ENCODE measurements at regions of chr6 and their contacts with region 1.

Region 1: DNA sequence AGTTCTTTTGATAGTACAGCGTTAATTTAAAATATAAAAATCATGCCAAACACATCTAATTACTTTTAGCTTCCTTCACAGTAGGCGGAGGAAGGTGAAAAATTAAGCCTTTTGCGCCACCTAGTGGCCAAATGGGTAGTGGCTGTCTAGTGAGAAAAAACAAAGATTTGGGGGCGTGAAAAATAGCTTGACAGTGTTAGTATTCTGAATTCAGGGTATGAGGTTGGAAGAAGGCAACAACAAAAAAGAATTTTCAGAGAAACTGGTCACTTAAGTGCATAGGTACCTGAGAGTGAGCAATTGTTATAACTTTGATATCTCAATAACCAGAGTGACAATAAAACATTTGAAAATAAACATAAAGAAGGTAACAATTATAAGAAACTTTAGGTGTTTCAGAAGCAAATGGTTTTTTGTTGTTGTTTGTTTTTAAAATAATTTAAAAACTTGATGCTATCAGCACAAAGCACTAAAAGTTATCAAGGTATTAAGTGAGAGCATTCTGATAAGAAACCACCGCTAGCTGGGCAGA is 14.3 kb downstream of the PSMB9 start:
- DNase-seq: peak; percentile 69 to 88 (median 73)
- ATAC-seq: peak; percentile 97
- H3K4me3 ChIP-seq: no peak overlapping the region
- H3K27ac ChIP-seq: no peak overlapping the region
- H3K4me1 ChIP-seq: no peaks in the 10 kb centered on the region
- H3K27me3 ChIP-seq: peaks cover 15 to 18% of the 10 kb centered on the region in 2 experiments; a peak in 4 of 5 replicates
- CTCF ChIP-seq: peak; percentile 82 to 98 (median 89)
- EP300 ChIP-seq: no peak
- POLR2A ChIP-seq: no peak
- RAD21 ChIP-seq: peak; percentile 95 to 98

Region 2: GRCh38 chr6:32413427-32414047 is 454.8 kb before region 1 on chr6:
- CTCF ChIA-PET with region 1: interaction called, 24 read pairs
- POLR2A ChIA-PET with region 1: no interaction called
- in situ Hi-C with region 1: no loop called
- intact Hi-C with region 1: loop called (anchors 2 kb)
- DNase-seq: peak; percentile 78 to 86 (median 82)
- ATAC-seq: peak; percentile 95
- H3K4me3 ChIP-seq: no peak overlapping the region
- H3K27ac ChIP-seq: no peak overlapping the region
- H3K4me1 ChIP-seq: no peaks in the 10 kb centered on the region
- H3K27me3 ChIP-seq: peaks cover 2 to 16% of the 10 kb centered on the region in 2 experiments; a peak in 4 of 5 replicates
- CTCF ChIP-seq: peak; percentile 89 to 95 (median 94)
- EP300 ChIP-seq: no peak
- POLR2A ChIP-seq: no peak
- RAD21 ChIP-seq: peak; percentile 87 to 95

Region 3: DNA sequence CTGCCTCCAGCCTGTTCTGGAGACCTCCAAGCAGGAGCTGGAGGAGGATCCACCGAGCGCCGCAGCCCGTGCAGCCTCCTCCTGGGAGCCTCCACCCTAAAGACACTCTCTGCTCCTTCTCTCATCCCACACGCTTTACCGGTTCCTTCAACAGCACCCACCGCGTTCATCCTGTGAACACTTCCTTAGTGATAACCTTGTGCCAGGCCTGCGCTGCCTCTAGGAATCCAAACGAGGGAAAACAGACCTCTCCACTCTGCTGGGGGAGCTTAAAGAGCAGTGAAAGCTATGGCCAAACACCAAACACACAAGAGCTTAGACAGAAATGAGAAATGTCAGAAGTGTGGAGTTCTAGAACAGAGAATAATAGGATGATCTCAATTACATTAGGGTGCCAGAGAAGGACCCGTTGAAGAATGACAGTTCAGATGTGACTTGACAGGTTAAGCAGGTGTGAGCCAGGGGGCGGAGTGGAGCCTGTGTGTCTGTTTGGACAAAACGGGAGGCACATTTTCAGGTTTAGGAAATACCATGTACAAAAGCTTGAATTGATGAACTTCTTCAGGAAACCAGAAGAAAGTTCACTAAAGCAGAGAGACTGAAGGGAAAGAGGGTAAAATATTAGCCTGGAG is 309.8 kb before region 1 on chr6:
- CTCF ChIA-PET with region 1: no interaction called
- POLR2A ChIA-PET with region 1: no interaction called
- in situ Hi-C with region 1: no loop called
- intact Hi-C with region 1: no loop called
- DNase-seq: no peak
- ATAC-seq: no peak
- H3K4me3 ChIP-seq: no peak overlapping the region
- H3K27ac ChIP-seq: no peak overlapping the region
- H3K4me1 ChIP-seq: no peaks in the 10 kb centered on the region
- H3K27me3 ChIP-seq: no peaks in the 10 kb centered on the region
- CTCF ChIP-seq: no peak
- EP300 ChIP-seq: no peak
- POLR2A ChIP-seq: no peak
- RAD21 ChIP-seq: no peak

Region 4: GRCh38 chr6:32796848-32797776 is 71.2 kb before region 1 on chr6:
- CTCF ChIA-PET with region 1: interaction called, 11 read pairs
- POLR2A ChIA-PET with region 1: interaction called, 4 read pairs
- in situ Hi-C with region 1: no loop called
- intact Hi-C with region 1: loop called (anchors 5 kb)
- DNase-seq: peak; percentile 68 to 78 (median 76)
- ATAC-seq: peak; percentile 94
- H3K4me3 ChIP-seq: no peak overlapping the region
- H3K27ac ChIP-seq: no peak overlapping the region
- H3K4me1 ChIP-seq: no peaks in the 10 kb centered on the region
- H3K27me3 ChIP-seq: peaks cover 24% of the 10 kb centered on the region in 2 experiments
- CTCF ChIP-seq: peak; percentile 80 to 93 (median 88)
- EP300 ChIP-seq: no peak
- POLR2A ChIP-seq: no peak
- RAD21 ChIP-seq: peak; percentile 76 to 81

Region 5: DNA sequence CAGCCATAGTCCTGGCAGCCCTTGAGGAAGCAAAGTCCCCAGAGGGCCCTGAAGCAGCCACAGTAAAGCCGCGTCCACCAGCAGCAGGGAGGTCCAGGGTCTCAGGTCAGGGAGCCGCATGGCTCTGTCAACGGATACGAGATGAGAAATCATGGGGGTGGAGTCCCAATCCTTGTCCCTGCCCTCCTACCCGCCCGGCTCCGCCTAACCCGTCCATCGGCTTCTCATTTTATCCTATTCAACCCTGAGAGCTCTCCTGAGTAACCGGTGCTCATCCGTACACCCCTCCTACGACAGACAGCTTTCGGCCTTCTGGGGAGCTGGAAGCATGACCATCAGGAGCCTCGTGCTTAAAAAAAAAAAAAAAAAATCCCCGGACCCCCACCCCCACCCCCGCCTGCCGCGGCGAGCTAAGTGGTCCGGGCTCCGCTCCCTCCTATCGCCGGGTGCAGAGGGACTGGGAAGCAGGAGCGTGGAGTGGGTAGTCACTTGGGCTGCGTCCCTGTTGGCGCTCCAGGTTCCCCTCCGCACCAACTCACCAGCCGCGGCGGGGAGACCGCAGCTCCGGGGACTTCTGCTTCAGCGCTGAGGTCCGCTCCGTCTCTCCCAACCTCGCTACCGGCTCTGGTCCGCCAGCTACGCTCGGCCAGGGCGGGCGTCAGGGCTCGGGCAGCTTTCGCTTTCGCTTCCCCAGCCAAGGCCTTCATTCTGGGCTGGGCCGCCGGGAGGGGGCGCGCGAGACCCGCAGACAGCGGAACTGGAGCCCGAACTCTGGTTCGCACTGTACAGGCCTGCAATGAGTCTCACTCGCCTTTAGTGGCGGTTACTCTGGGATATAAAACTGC is 30.0 kb before region 1 on chr6 and contains the start of gene TAP2:
- CTCF ChIA-PET with region 1: interaction called, 66 read pairs
- POLR2A ChIA-PET with region 1: interaction called, 17 read pairs
- in situ Hi-C with region 1: no loop called
- intact Hi-C with region 1: loop called (anchors 1 kb)
- DNase-seq: peak; percentile 94 to 97 (median 96)
- ATAC-seq: peak; percentile 94
- H3K4me3 ChIP-seq: peak within 1 kb of the TSS; percentile 73
- H3K27ac ChIP-seq: peak within 1 kb of the TSS; percentile 75
- H3K4me1 ChIP-seq: peaks cover 6 to 9% of the 10 kb centered on the region in 2 experiments; a peak in 3 of 5 replicates
- H3K27me3 ChIP-seq: no peaks in the 10 kb centered on the region
- CTCF ChIP-seq: peak; percentile 98 to 99 (median 99)
- EP300 ChIP-seq: no peak
- POLR2A ChIP-seq: peak; percentile 83
- RAD21 ChIP-seq: peak; percentile 100
- polyA plus RNA-seq, gene TAP2: 2.0 to 3.1 TPM

Measured in K562 (cell line).